Mammary epithelial cell (primary cell): ENCODE measurements at regions of chr7 and their contacts with region 1.

Region 1: GRCh38 chr7:46854958-46855491 is 726.9 kb downstream of the TNS3 start:
- DNase-seq: peak; percentile 12
- H3K4me3 ChIP-seq: no peak overlapping the region
- H3K27ac ChIP-seq: no peak overlapping the region
- H3K4me1 ChIP-seq: peaks cover 4% of the 10 kb centered on the region
- H3K27me3 ChIP-seq: no peaks in the 10 kb centered on the region
- CTCF ChIP-seq: no peak

Region 2: GRCh38 chr7:46811529-46811928 is 43.5 kb before region 1 on chr7:
- CTCF ChIA-PET with region 1: no interaction called
- dilution Hi-C with region 1: loop called (anchors 5 kb)
- in situ Hi-C with region 1: no loop called
- intact Hi-C with region 1: no loop called
- DNase-seq: peak; percentile 73
- H3K4me3 ChIP-seq: no peak overlapping the region
- H3K27ac ChIP-seq: no peak overlapping the region
- H3K4me1 ChIP-seq: peaks cover 10% of the 10 kb centered on the region
- H3K27me3 ChIP-seq: no peaks in the 10 kb centered on the region
- CTCF ChIP-seq: no peak

Region 3: DNA sequence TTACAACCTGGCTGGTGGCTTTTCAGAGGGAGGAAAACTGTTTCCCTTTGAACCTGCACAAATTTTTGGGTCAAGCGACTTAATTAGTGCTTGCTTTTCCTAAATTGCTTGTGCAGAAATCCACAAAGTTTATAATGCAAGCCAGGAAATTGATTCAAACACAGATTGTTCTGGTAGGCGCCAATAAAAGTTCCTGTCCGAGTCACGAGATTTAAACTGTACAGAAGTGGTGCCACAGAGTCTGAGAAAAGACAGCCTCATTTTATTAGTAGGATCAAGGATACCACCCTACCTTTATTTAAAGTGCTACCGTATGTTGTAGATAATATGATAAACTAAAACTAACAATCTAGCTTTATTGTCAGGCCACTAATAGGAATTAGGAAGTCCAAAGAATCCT is 30.1 kb after region 1 on chr7:
- CTCF ChIA-PET with region 1: no interaction called
- dilution Hi-C with region 1: loop called (anchors 5 kb)
- in situ Hi-C with region 1: no loop called
- intact Hi-C with region 1: no loop called
- DNase-seq: no peak
- H3K4me3 ChIP-seq: no peak overlapping the region
- H3K27ac ChIP-seq: no peak overlapping the region
- H3K4me1 ChIP-seq: peaks cover 5% of the 10 kb centered on the region
- H3K27me3 ChIP-seq: no peaks in the 10 kb centered on the region
- CTCF ChIP-seq: no peak

Region 4: DNA sequence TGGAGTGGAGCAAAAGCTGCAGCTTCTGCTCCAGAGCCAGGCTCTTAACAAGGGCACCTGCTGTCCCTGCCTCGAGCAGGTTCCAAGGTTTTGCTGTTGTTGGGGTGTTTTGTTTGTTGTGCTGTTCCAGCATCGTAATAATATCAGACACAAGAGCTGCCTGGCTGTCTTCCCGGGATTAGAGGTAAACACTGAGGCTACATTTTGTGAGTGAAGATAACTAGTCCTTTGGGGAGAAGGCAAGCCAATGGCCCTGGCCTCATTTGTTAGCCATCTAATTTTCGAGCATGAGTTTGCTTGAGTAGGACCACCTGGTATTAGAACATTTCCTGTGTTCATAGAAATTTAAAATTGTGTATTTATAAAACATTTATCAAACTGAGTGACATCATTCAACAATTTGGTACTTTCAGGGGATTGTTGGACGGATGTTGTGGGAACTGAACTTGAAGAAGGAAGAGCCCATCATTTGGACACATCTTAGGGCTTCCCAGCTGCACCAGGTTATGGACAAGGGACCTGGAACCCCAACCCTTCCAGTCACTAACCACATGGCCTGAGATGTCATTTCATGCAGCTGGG is 171.8 kb after region 1 on chr7:
- CTCF ChIA-PET with region 1: no interaction called
- dilution Hi-C with region 1: no loop called
- in situ Hi-C with region 1: no loop called
- intact Hi-C with region 1: no loop called
- DNase-seq: no peak
- H3K4me3 ChIP-seq: no peak overlapping the region
- H3K27ac ChIP-seq: no peak overlapping the region
- H3K4me1 ChIP-seq: no peaks in the 10 kb centered on the region
- H3K27me3 ChIP-seq: peaks cover 12% of the 10 kb centered on the region
- CTCF ChIP-seq: no peak